Activated naive CD4-positive, alpha-beta T cell treated with anti-CD3 and anti-CD28 coated beads for 36 hours (primary cell): ENCODE measurements at regions of chr20 and their contacts with region 1.

Region 1: DNA sequence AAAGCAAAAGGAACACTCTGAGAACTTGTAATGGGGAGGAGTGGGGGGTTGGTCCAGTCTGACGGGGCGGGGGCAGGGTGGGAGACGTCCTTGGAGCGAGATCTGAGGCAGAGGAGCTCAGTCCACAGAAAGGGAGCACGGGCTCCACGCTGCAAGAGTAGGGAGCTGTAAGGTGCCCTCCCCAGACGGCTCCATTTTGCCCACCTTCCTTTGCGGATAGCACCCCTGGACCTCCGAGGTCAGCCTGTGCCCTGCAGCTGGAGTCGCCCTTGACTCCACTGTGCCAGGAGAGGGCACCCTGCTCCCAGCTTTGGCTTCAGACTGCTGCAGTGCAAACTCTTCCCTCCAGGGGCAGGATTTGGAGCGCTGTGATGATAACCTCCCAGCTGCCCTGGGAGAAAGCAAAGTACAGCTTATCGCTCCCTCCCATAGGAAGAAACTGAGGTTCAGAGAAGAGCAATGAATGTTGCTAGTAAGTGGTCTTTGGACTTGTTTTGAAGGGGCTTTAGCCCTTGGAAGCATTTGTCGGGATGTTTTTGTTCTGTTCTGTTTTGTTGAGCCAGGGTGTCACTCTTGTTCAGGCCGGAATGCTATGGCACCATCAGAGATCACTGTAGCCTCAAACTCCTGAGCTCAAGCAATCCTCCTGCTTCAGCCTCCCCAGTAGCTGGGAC is 9.5 kb upstream of the AHCY start:
- DNase-seq: peak; percentile 95
- H3K4me3 Mint-ChIP-seq: no peak overlapping the region
- H3K27ac Mint-ChIP-seq: no peak overlapping the region
- H3K4me1 Mint-ChIP-seq: peaks cover 11% of the 10 kb centered on the region
- H3K27me3 Mint-ChIP-seq: peaks cover 14% of the 10 kb centered on the region

Region 2: DNA sequence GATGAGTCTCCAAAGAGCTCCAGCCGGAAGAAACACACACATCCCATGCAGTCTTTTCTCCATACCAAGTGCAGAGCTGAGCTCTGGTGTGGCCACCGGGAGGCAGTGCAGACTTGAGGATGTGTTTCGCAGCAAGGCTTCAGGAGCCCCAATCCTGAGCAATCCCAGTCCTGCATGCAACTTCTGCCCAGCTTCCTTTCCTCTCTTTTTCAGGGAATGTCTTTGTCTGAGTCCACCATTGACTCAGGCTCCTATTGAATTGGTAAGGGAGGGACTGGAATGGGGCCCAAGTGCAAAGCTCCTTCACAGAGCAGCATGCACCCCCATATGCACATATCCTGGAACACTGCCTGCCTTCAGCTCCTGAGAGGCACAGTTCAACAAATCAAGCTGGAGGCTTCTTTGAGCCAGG is 122.0 kb before region 1 on chr20:
- CTCF ChIA-PET with region 1: interaction called, 4 read pairs
- intact Hi-C with region 1: loop called (anchors 2 kb)
- DNase-seq: peak; percentile 71
- H3K4me3 Mint-ChIP-seq: no peak overlapping the region
- H3K27ac Mint-ChIP-seq: no peak overlapping the region
- H3K4me1 Mint-ChIP-seq: no peaks in the 10 kb centered on the region
- H3K27me3 Mint-ChIP-seq: peaks cover 3% of the 10 kb centered on the region

Region 3: GRCh38 chr20:34268145-34268544 is 44.5 kb before region 1 on chr20:
- CTCF ChIA-PET with region 1: no interaction called
- intact Hi-C with region 1: no loop called
- DNase-seq: no peak
- H3K4me3 Mint-ChIP-seq: no peak overlapping the region
- H3K27ac Mint-ChIP-seq: no peak overlapping the region
- H3K4me1 Mint-ChIP-seq: peaks cover 5% of the 10 kb centered on the region
- H3K27me3 Mint-ChIP-seq: peaks cover 5% of the 10 kb centered on the region

Region 4: DNA sequence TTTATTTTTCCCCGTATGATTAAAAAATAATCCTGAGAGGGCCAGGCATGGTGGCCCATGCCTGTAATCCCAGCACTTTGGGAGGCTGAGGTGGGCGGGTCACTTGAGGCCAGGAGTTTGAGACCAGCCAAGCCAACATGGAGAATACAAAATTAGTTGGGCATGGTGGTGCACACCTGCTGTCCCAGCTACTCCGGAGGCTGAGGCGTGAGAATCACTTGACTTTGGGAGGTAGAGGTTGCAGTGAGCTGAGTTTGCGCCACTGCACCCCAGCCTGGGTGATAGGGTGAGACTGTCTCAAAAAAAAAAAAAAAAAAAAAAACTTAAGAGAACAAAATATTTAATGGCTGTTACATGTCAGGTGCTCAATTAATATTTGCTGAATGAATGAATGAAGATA is 81.2 kb after region 1 on chr20:
- CTCF ChIA-PET with region 1: interaction called, 10 read pairs
- intact Hi-C with region 1: no loop called
- DNase-seq: no peak
- H3K4me3 Mint-ChIP-seq: no peak overlapping the region
- H3K27ac Mint-ChIP-seq: no peak overlapping the region
- H3K4me1 Mint-ChIP-seq: peaks cover 19% of the 10 kb centered on the region
- H3K27me3 Mint-ChIP-seq: no peaks in the 10 kb centered on the region

Region 5: DNA sequence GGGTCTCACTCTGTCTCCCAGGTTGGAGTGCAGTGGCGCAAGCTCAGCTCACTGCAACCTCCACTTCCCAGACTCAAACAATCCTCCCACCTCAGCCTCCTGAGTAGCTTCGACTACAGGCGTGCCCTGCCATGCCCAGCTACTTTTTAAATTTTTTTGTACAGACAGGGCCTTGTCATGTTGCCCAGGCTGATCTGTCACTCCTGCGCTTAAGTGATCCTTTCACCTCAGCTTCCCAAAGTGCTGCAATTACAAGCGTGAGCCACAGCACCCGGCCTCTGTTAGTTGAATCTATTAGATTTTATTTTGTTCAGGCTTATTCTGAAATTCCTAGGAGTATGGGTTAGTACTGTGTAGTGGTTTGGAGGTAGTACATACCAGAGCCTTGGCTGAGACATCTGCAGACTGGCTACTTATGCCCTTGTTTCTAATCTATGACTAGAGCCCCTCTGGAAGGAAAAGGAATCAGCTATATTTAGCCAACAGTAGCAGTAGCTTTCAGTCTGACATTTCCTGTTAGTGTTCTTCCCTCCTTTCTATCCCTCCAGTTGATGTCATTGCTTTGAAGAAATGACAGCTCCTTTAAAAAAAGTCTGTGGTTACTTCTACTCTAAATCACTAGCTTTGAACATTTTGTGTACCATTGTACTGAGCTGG is 124.8 kb after region 1 on chr20:
- CTCF ChIA-PET with region 1: interaction called, 25 read pairs
- intact Hi-C with region 1: no loop called
- DNase-seq: no peak
- H3K4me3 Mint-ChIP-seq: no peak overlapping the region
- H3K27ac Mint-ChIP-seq: peak overlapping the region; percentile 35
- H3K4me1 Mint-ChIP-seq: peaks cover 19% of the 10 kb centered on the region
- H3K27me3 Mint-ChIP-seq: no peaks in the 10 kb centered on the region

Region 6: DNA sequence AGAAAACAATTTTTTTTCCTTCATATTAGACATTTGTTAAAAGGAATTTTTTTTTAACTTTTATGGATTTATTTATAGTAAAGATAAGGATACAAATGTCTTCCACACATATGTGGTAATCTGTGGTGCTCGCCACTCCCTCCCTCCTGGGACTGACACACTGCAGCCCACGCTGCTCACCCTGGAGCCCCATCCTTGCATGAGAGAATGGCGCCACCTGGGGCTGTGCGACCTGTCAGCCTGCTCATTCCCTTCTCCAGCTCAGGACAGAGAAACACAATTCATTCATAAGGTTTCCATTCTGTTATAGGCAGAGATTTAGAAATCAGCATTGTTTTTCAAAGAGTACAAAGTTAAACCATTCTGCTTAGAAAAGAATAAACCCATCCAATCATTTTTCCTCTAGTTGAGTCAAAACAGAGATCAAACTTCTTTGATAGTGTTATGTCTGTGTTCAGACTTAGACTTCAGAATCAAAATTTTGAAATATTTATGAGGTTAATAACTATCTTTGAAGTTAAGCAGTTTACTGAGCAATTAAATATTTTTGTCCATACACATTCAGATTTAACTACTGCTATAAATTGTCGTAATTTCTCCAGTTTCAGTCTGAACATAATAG is 160.7 kb after region 1 on chr20:
- CTCF ChIA-PET with region 1: interaction called, 23 read pairs
- intact Hi-C with region 1: loop called (anchors 1 kb)
- DNase-seq: peak; percentile 65
- H3K4me3 Mint-ChIP-seq: no peak overlapping the region
- H3K27ac Mint-ChIP-seq: no peak overlapping the region
- H3K4me1 Mint-ChIP-seq: peaks cover 6% of the 10 kb centered on the region
- H3K27me3 Mint-ChIP-seq: no peaks in the 10 kb centered on the region

Region 7: GRCh38 chr20:34522969-34523871 is 210.5 kb after region 1 on chr20:
- CTCF ChIA-PET with region 1: interaction called, 82 read pairs
- intact Hi-C with region 1: loop called (anchors 1 kb)
- DNase-seq: peak; percentile 74
- H3K4me3 Mint-ChIP-seq: no peak overlapping the region
- H3K27ac Mint-ChIP-seq: no peak overlapping the region
- H3K4me1 Mint-ChIP-seq: peaks cover 42% of the 10 kb centered on the region
- H3K27me3 Mint-ChIP-seq: no peaks in the 10 kb centered on the region

Region 8: DNA sequence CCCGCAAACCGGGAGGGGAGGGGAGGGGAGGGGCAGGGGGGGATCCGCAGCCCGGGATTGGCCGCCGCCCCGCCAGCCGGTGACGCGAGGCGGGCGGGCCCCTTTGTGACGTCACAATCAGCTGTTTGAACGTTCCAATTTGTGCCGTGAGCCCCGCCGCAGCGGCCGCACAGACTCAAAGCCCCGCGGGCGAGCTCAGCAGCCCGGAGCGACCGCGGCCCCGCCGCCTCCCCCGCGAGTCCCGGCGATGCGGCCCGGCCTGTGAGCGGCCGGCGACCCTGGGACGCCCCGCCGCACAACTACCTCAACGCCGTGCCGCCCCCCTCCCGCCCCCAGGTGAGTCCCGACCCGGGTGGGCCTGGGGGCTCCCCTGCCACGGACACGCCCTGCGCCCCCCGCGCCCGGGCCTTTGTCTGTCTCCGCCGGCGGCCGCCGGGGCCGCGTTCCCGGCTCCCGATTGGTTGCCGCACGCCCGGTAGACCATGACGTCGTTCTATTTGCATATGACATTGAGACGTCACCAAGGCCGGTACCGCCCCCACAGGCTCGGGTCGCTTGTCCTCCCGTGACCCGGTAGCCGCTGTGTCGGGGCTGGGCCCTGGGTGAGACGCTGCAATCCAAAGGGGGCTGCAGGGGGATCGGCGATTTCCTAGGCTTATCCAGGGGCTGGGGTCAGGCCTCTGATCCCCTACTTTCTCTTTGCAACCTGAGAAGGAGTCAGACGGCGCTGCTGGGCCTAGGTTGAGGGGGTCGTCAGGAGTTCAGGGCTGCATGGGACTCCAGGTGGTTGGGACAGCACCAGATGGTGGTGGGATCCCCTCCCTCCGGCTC is 391.7 kb after region 1 on chr20 and contains the start of gene TP53INP2:
- CTCF ChIA-PET with region 1: interaction called, 49 read pairs
- intact Hi-C with region 1: loop called (anchors 1 kb)
- DNase-seq: peak; percentile 81
- H3K4me3 Mint-ChIP-seq: peak within 1 kb of the TSS; percentile 90
- H3K27ac Mint-ChIP-seq: peak within 1 kb of the TSS; percentile 13
- H3K4me1 Mint-ChIP-seq: peaks cover 10% of the 10 kb centered on the region
- H3K27me3 Mint-ChIP-seq: peaks cover 6% of the 10 kb centered on the region
- total RNA-seq, gene TP53INP2: 1.9 TPM

Region 9: GRCh38 chr20:36153736-36154699 is 1841.3 kb after region 1 on chr20:
- CTCF ChIA-PET with region 1: no interaction called
- intact Hi-C with region 1: no loop called
- DNase-seq: peak; percentile 40
- H3K4me3 Mint-ChIP-seq: no peak overlapping the region
- H3K27ac Mint-ChIP-seq: no peak overlapping the region
- H3K4me1 Mint-ChIP-seq: peaks cover 4% of the 10 kb centered on the region
- H3K27me3 Mint-ChIP-seq: peaks cover 20% of the 10 kb centered on the region